ENCODE measurements at regions of chr14 and their contacts with region 1.

Region 1: DNA sequence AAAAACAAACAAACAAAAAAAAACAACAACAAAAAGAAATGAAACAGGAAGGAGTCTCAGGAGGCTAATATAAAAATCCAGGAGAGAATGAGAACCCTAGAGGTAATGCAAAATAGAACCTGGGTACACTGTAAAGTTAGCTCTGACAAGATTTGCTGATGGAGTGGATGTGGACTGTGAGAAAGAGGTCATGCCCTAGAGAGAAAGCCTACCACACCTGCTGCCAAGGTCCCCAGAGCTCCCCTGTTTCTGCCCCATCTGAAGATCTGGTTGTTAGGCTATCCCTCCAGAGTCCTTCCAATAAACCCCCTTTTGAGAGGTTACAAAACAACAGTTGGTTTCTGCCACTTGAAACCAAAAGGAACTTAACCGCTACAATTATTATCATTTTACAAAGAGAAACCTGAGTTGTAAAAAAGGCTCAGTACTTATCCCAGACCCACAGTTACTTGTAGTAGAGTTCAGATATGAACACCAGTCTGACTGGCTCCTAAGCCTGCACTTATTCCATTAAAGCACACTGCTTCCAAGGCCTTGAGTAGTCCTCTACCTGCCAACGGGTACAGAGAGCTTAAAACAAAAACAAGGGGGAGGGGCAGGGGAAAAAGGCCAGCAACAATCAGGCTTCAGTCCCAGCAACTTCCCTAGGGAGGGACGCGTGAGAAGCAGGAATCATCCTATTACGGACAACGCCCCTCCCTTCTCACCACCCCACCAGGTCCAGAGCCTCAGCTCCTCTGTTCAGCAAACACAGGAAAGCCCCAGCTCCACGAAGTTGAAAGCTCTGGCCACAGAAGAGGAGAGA is 27.7 kb downstream of the PPP1R13B start:
- DNase-seq: no peak
- H3K4me3 ChIP-seq: peak overlapping the region in 1 of 3 donors; percentile 9
- H3K27ac ChIP-seq: peak overlapping the region; percentile 50 to 74
- H3K4me1 ChIP-seq: no peaks in the 10 kb centered on the region
- H3K27me3 ChIP-seq: no peaks in the 10 kb centered on the region
- CTCF ChIP-seq: no peak
- POLR2A ChIP-seq: no peak

Region 2: DNA sequence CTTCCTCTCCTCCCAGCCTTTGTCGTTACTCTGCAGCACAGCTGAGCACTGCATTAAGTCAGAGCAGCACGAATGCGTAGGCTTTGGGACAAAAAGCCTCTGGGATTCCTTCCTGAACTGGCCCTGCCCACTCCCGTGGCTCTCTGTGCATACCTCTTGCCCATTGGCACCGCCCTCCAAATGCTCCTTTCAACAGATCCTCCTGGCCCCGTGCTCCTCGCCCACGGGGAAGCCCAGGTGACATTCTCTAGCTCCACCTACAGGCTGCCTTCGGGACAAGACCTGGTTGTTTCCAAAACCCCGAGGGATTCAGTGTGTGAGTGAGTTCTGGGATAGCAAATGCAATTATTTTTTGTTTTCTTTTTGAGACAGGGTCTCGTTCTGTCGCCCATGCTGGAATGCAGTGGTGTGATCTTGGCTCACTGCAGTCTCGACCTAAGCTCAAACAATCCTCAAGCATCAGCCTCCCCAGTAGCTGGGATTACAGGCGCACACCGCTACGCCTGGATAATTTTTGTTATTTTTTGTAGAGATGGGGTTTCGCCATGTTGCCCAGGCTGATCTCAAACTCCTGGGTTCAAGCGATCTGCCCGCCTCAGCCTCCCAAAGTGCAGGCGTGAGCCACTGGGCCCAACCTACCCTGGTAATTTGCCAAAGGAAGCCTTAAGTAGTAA is 90.7 kb after region 1 on chr14:
- intact Hi-C with region 1: loop called (anchors 10 kb)
- DNase-seq: peak; percentile 92 to 94
- H3K4me3 ChIP-seq: peak overlapping the region in 2 of 3 donors; percentile 6 to 48
- H3K27ac ChIP-seq: peak overlapping the region; percentile 21 to 27
- H3K4me1 ChIP-seq: no peaks in the 10 kb centered on the region
- H3K27me3 ChIP-seq: no peaks in the 10 kb centered on the region
- CTCF ChIP-seq: peak; percentile 61 to 96 (median 88)
- POLR2A ChIP-seq: no peak